Heart left ventricle (tissue), 16 donors: ENCODE measurements at regions of chr17 and their contacts with region 1.

Region 1: DNA sequence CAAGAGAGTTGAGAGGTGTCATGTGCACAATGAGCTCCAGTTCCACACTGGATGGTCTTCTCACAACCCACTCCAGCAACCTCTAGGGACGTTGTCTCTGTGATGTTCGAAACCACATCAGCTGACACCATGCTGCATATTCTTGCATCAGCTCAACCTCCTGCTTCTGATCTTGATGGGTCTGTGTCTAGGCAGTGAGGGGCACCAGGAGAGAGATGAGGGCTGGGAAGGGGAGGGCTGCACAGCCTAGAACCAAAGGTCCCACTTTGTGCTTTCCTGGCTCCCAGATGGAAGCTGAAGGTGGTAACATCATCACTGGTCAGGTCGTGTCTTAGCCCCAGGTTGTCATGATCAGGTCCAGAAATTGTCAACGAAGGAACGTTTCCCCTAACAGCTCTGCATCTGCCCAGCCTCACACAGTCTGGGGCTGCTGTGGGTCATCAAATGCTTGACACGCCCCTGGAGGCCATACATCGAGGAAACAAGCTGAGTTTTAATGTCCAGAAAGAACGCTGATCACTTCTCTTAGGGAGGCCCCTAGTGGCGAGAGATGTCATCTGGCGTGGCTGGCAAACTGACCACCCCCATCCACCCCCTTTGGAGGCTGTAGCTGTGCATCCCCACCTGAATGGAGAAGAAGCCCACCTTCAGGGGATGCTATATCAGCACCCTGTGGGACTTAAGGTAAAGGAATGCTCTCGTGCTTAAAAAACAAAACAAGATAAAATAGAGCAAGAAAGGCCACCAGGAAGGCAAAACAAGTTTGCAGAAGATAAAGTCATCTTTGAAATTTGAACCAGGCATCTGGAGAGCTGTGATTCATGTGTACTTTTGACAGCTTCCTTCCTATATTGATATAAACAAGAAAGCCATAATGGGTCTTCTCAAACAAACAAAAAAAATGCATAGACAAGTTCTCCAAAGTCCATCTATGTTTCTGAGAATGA is 58.3 kb downstream of the WIPI1 start:
- DNase-seq: peak in 4 of 5 donors; percentile 38 to 67 (median 52)
- ATAC-seq: peak; percentile 36 to 81 (median 61)
- H3K4me3 ChIP-seq: no peak overlapping the region
- H3K27ac ChIP-seq: peak overlapping the region in 3 of 12 donors; percentile 44 to 64 (median 51)
- H3K4me1 ChIP-seq: peaks cover 0 to 19% (median 12%) of the 10 kb centered on the region in 12 donors
- H3K27me3 ChIP-seq: no peaks in the 10 kb centered on the region
- CTCF ChIP-seq: peak; percentile 60 to 82 (median 73)
- POLR2A ChIP-seq: no peak

Region 2: GRCh38 chr17:68172461-68172954 is 226.5 kb before region 1 on chr17:
- intact Hi-C with region 1: loop called in 1 of 10 experiments (anchors 10 kb)
- DNase-seq: peak; percentile 53 to 73 (median 62)
- ATAC-seq: peak; percentile 54 to 81 (median 77)
- H3K4me3 ChIP-seq: no peak overlapping the region
- H3K27ac ChIP-seq: no peak overlapping the region
- H3K4me1 ChIP-seq: peaks cover 0 to 4% (median 0%) of the 10 kb centered on the region in 12 donors
- H3K27me3 ChIP-seq: no peaks in the 10 kb centered on the region
- CTCF ChIP-seq: peak; percentile 91 to 99 (median 97)
- POLR2A ChIP-seq: no peak

Region 3: DNA sequence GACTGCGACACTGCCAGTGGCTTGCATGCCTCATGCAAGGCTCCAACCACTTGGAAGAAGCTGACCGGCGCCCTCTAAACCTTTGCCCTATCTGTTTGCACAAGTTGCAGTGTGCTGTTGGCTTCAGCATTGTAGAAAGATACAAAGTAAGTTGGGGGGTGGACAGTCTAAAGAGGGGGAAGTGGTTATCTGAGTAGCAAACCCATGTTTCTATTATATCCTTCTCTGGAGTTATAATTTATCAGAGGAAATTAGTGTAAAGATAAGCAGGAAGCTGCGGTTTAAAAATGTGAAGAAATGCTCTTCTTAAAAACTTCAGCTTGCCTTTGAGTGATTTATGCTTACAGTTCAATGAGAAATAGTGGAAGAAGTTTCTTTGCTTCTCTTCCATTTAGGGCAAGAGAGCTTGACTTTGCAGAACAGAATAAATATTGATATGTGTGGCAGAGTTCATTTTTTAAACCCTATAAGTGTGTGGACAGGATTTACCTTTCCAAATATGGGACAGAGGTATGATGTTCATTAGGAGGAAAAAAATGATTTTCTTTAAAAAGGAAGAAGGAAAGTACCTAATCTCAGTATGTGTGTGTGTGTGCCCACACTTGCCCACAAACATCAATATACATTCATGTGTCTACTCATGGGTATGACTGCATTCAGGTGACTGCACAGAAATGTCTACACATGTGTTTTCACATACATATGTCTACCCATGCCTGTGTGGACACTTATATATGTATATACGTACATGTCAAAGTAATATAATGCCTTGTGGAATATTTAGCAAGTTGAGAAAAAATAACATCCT is 143.0 kb before region 1 on chr17:
- intact Hi-C with region 1: loop called in 6 of 10 experiments (anchors 5 to 10 kb)
- DNase-seq: no peak
- ATAC-seq: no peak
- H3K4me3 ChIP-seq: no peak overlapping the region
- H3K27ac ChIP-seq: peak overlapping the region in 1 of 12 donors; percentile 64
- H3K4me1 ChIP-seq: peaks cover 0 to 51% (median 10%) of the 10 kb centered on the region in 12 donors
- H3K27me3 ChIP-seq: no peaks in the 10 kb centered on the region
- CTCF ChIP-seq: no peak
- POLR2A ChIP-seq: no peak

Region 4: GRCh38 chr17:68351395-68351794 is 47.6 kb before region 1 on chr17:
- intact Hi-C with region 1: loop called in 2 of 10 experiments (anchors 1 to 2 kb)
- DNase-seq: peak in 2 of 5 donors; percentile 13 to 45
- ATAC-seq: peak in 3 of 4 donors; percentile 26 to 62 (median 57)
- H3K4me3 ChIP-seq: no peak overlapping the region
- H3K27ac ChIP-seq: no peak overlapping the region
- H3K4me1 ChIP-seq: peaks cover 0 to 66% (median 0%) of the 10 kb centered on the region in 12 donors
- H3K27me3 ChIP-seq: no peaks in the 10 kb centered on the region
- CTCF ChIP-seq: peak in 11 of 12 donors; percentile 13 to 51 (median 37)
- POLR2A ChIP-seq: no peak

Region 5: DNA sequence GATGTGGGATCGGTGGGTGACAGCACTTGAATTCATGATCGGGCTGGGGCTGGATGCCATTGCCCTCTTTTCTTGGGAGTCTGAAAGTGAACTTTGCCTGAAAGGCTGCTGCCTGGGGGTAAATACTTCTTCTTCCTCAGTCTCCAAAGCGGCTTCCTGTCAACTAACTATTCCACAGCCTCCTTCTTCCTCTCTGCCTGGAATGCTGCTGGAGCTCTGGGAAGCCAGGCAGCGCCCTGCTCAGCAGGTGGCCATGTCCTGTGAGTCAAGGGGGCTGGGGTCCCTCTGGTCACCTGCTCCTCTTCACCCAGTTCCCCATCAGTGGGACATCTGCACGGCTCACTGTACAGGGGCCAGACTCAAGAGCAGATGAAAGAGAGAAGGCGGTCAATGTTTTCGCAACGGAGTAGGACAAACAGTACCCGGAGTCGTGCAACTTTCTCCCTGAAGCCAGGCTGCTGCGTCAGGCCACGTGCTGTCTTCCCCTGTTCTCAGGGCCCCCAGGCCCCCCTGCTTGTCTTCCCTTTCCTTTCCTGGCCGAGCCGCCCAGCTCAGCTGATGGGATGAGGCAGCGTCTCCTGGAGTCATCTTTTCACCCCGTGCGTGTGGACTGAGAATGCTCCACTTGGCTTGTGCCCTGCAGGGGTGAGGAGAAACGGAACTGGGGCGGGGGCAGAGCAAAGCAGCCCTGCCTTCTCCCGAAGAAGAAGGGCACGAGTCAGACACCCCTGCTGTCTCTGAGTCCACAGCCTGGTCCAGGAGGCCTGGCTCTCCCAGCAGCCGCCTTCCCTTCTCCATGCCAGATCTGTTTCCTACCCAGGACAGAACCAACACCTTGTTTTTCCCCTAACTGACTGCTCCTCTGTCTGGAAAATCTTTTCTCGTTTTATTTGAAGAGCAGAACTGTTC is 20.8 kb before region 1 on chr17:
- intact Hi-C with region 1: loop called in 1 of 10 experiments (anchors 2 kb)
- DNase-seq: peak; percentile 89 to 99 (median 93)
- ATAC-seq: peak; percentile 92 to 94 (median 94)
- H3K4me3 ChIP-seq: peak overlapping the region in 8 of 12 donors; percentile 8 to 31 (median 18)
- H3K27ac ChIP-seq: peak overlapping the region; percentile 87 to 99 (median 96)
- H3K4me1 ChIP-seq: peaks cover 7 to 55% (median 35%) of the 10 kb centered on the region in 12 donors
- H3K27me3 ChIP-seq: no peaks in the 10 kb centered on the region
- CTCF ChIP-seq: no peak
- POLR2A ChIP-seq: no peak

Region 6: DNA sequence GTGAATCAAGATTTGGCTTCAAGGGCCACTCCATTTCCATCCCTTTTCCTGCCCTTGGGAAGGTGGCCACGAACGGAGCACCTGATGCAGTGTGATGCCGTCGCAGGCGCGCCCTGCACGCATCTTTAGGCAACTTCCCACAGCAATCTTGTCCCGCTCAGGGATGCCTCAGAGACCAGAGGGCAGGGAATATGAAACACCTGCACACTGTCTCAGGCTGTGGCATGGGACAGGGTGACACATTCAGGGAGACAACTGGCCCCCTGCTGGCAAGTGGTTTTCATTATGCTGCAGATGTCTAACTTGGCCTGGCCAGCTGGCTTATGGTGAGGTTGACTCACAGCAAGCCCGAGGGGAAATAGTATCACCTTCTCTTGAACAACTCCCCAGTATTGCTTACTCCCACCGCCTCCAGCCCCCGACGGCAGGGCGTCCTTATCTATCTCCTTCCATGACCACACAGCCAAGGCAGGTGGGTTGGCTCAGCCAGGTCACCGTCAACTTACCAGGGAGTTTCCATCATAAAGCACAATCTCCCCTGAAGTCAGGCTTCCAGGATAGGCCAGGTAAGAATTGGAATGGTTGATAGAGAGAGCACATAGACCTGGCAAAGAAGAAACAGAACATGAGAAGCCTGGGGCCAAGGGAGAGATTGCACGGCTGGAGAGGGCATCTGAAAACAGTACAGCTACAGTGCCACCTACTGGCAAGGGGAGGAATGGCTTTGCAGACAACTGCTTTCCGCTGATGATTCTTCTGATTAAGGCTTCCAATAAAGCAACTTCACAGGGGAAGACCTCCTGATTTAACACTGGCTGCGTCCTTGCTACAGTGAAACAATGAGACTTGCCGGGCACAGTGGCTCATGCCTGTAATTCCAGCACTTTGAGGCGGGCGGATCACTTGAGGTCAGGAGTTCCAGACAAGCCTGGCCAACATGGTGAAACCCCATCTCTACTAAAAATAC is 37.2 kb after region 1 on chr17:
- intact Hi-C with region 1: loop called in 1 of 10 experiments (anchors 5 kb)
- DNase-seq: peak; percentile 66 to 81 (median 72)
- ATAC-seq: peak; percentile 50 to 71 (median 68)
- H3K4me3 ChIP-seq: no peak overlapping the region
- H3K27ac ChIP-seq: peak overlapping the region in 9 of 12 donors; percentile 14 to 86 (median 54)
- H3K4me1 ChIP-seq: peaks cover 3 to 74% (median 52%) of the 10 kb centered on the region in 12 donors
- H3K27me3 ChIP-seq: no peaks in the 10 kb centered on the region
- CTCF ChIP-seq: peak; percentile 86 to 94 (median 89)
- POLR2A ChIP-seq: no peak

Region 7: GRCh38 chr17:68462381-68463210 is 63.6 kb after region 1 on chr17:
- intact Hi-C with region 1: no loop called
- DNase-seq: peak; percentile 62 to 87 (median 72)
- ATAC-seq: peak; percentile 63 to 80 (median 78)
- H3K4me3 ChIP-seq: peak overlapping the region in 2 of 12 donors; percentile 15
- H3K27ac ChIP-seq: peak overlapping the region; percentile 59 to 96 (median 80)
- H3K4me1 ChIP-seq: peaks cover 0 to 57% (median 28%) of the 10 kb centered on the region in 12 donors
- H3K27me3 ChIP-seq: no peaks in the 10 kb centered on the region
- CTCF ChIP-seq: peak; percentile 56 to 84 (median 75)
- POLR2A ChIP-seq: no peak

Region 8: GRCh38 chr17:68613739-68614298 is 214.9 kb after region 1 on chr17:
- intact Hi-C with region 1: loop called in 1 of 10 experiments (anchors 10 kb)
- DNase-seq: peak in 2 of 5 donors; percentile 40 to 46
- ATAC-seq: peak; percentile 42 to 80 (median 71)
- H3K4me3 ChIP-seq: no peak overlapping the region
- H3K27ac ChIP-seq: no peak overlapping the region
- H3K4me1 ChIP-seq: peaks cover 0 to 5% (median 0%) of the 10 kb centered on the region in 12 donors
- H3K27me3 ChIP-seq: no peaks in the 10 kb centered on the region
- CTCF ChIP-seq: peak; percentile 46 to 75 (median 66)
- POLR2A ChIP-seq: no peak